Posterior cingulate gyrus (tissue), 11 donors: ENCODE measurements at regions of chr1 and their contacts with region 1.

Region 1: DNA sequence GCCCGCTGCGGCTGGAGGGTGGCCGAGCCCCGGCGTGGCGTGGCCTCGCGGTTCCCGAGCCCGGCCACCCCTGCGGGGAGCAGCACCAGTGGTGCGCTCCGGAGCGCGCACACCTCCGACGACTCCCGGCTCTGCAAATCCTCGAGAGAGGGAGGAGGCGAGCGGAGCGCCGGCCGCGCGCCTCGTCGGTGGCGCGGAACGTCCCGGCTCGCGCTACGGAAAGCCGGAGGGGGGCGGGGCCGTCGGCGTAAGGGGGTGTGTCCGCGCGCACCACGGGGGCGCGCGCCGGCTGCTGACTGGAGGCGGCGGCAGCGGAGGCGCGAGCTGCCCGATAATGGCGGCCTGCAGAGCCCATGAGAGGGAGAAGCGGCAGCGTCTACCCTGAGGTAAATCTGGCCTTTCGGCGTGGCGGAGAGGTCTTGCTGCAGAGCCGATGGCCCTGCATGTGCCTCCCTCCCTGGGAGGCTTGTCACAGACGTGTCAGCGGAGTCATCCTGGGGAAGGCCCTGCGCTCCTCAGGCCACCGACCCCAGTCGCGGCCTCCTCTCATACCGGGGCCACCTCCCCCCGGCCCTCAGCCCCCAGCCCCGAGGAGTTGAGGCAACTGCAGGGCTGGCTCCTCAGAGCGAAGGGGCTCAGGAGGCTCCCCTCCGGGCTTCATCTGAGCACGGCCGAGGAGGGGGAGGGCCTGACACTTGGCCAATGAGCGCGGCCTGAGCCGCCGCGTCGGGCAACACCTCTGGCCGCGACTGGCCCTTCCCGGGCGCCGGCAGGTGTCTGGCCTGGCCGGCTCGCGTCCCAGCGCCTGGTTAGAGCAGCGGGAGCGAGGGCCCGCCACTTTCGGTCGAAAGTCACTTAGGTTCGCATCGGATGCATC is at the start of gene PDIK1L:
- DNase-seq: peak; percentile 86 to 98 (median 89)

Region 2: GRCh38 chr1:26169669-26170471 is 58.1 kb after region 1 on chr1 and contains the start of gene ZNF593:
- intact Hi-C with region 1: loop called (anchors 2 kb)
- DNase-seq: peak; percentile 85 to 99 (median 92)